HEK293T (cell line): ENCODE measurements at regions of chr12 and their contacts with region 1.

Region 1: DNA sequence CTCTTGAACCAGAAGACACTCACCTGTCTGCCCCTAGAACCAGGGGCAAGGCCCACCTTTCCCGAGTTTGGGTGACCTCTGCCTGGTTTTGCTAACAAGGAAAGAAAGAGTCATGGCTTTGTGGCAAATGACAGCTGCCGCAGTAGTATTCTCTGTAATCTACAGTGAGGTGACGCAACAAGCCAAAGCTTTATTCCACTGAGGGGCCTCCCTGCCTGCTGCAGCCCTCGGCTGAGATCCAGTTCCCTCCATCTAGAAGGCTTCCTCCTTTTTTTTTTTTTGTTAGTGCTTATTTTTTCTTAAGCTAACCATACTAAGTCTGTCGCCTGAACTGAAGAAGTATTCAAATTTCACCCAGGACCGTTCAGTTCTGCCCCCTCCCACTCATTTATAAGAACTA is 142.3 kb upstream of the TMCC3 start:
- DNase-seq: peak; percentile 15

Region 2: DNA sequence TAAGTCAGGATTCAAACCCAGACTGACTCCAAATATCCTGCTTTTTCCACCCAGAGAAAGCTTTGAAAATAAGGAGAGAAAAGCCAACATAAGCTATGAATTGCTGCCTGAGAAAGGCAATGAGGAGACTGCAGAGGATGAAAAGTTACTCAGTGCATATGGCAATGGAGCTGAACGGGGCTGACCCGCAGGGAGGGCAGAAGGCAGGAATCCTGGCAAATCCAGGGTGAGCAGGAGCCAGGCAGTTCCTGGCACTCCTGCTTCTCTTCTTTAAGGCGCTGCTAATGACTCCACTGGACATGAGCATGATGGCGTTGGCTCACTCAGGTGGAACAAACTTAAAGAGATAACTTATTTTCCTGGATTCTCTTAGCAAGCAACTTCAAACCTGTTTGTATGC is 47.1 kb before region 1 on chr12:
- CTCF ChIA-PET with region 1: interaction called, 13 read pairs
- POLR2A ChIA-PET with region 1: no interaction called
- DNase-seq: no peak

Region 3: DNA sequence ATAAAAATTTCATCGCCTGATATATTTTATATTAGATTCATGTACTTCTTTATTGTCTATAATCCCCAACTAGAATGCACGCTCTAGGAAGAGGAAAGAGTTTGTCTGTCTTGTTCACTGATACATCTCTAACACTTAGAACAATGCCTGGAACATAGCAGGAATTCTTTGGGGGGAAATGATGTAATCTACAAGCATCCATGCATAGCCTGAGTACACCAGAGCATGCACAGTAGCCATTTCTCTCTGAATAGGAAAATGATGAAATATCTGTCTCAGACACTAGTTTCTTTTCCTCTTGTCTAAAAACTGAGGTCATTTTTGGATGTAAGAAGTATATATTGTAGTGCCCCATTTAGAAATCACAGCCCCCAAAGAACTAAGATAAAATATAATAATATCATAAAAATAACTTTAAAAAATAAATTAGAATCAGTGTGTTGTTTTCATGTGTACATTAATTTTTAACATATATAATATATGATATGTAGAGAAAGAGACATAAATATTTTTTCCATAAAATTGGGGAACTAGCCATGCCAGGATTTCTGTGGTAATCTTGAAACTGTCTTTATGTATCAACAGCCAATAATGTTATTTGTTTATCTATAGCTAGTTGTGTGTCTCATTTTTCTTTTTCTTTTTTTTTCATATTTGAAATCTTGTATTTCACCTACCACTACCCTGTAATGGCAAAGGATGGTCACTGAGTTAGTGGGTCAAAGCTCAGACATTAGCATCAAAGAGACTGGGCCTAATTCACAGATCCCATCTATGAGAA is 13.2 kb after region 1 on chr12:
- CTCF ChIA-PET with region 1: no interaction called
- POLR2A ChIA-PET with region 1: no interaction called
- DNase-seq: no peak